ENCODE measurements at regions of chr14 and their contacts with region 1.

Region 1: DNA sequence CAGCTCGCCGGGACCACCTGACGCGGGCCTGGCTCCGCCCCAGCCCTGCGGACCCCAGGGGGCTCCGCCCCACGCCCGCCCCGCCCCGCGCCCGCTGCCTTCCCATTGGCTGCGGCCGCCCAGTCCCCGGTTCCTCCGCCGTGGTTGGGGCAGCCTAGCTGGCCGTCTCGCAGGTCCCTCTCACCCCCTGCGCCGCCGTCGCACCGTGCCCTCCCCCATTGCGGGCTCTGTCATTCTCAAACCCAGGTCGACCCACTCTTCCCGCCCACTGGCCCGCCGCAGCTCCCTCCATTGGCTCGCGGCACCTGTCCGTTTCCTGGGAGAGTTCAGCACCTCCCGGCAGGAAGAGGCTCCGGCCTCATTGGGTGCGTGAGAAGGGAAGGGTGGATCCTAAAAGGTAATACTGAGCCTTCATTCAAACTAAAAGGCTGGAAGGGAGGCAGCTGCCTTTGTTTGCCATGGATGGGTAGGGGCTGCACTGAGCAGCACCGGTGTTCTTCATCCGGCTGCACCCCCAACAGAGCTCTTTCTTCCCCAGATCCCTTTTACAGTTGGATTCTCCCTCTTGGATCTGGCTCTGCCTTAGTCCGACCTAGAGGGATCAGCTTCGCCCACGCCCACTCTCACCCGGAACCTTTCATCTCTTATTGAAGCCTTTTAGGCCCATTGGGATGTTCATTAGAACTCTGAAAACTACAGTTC is 381 bp upstream of the MAP3K9 start:
- DNase-seq: peak; percentile 98
- ATAC-seq: peak; percentile 89
- H3K4me3 ChIP-seq: peak overlapping the region; percentile 83
- H3K27ac ChIP-seq: peak overlapping the region; percentile 13
- H3K4me1 ChIP-seq: peaks cover 39% of the 10 kb centered on the region
- H3K27me3 ChIP-seq: no peaks in the 10 kb centered on the region
- CTCF ChIP-seq: no peak

Region 2: GRCh38 chr14:70600382-70601157 is 209.1 kb before region 1 on chr14 and contains the start of gene MED6:
- CTCF ChIA-PET with region 1: no interaction called
- POLR2A ChIA-PET with region 1: interaction called, 11 read pairs
- intact Hi-C with region 1: loop called (anchors 1 kb)
- DNase-seq: peak; percentile 94
- ATAC-seq: peak; percentile 95
- H3K4me3 ChIP-seq: peak within 1 kb of the TSS; percentile 87
- H3K27ac ChIP-seq: peak within 1 kb of the TSS; percentile 31
- H3K4me1 ChIP-seq: peaks cover 24% of the 10 kb centered on the region
- H3K27me3 ChIP-seq: no peaks in the 10 kb centered on the region
- CTCF ChIP-seq: no peak
- total RNA-seq, gene MED6: 37.8 and 46.9 TPM in 2 replicates

Region 3: DNA sequence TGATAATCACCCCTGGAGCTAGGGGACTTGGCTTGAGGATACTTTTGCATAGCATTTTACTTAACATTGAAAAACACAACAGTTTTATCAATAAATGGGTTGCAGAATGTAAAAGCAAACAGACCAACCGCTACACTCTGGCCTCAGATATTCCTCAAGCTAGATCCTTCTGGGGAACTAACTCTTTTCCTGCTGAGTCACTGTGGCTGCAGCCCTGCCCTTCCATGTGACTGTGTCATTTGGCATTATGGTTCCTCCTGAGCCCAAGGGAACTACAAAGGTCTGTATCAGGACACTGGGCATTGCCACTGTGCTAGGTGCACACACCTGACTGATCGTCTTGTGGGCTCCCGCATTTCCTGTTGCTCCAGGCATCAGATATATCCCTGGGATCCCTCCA is 111.4 kb before region 1 on chr14:
- CTCF ChIA-PET with region 1: interaction called, 3 read pairs
- POLR2A ChIA-PET with region 1: interaction called, 5 read pairs
- intact Hi-C with region 1: loop called (anchors 2 kb)
- DNase-seq: peak; percentile 87
- ATAC-seq: peak; percentile 92
- H3K4me3 ChIP-seq: peak overlapping the region; percentile 9
- H3K27ac ChIP-seq: peak overlapping the region; percentile 96
- H3K4me1 ChIP-seq: peaks cover 27% of the 10 kb centered on the region
- H3K27me3 ChIP-seq: no peaks in the 10 kb centered on the region
- CTCF ChIP-seq: no peak

Region 4: GRCh38 chr14:70821584-70822529 is 12.2 kb after region 1 on chr14:
- CTCF ChIA-PET with region 1: interaction called, 22 read pairs
- POLR2A ChIA-PET with region 1: no interaction called
- intact Hi-C with region 1: no loop called
- DNase-seq: peak; percentile 41
- ATAC-seq: peak; percentile 44
- H3K4me3 ChIP-seq: peak overlapping the region; percentile 76
- H3K27ac ChIP-seq: no peak overlapping the region
- H3K4me1 ChIP-seq: peaks cover 23% of the 10 kb centered on the region
- H3K27me3 ChIP-seq: no peaks in the 10 kb centered on the region
- CTCF ChIP-seq: no peak

Region 5: GRCh38 chr14:71036446-71036845 is 226.8 kb after region 1 on chr14:
- CTCF ChIA-PET with region 1: interaction called, 24 read pairs
- POLR2A ChIA-PET with region 1: no interaction called
- intact Hi-C with region 1: no loop called
- DNase-seq: peak; percentile 18
- ATAC-seq: peak; percentile 96
- H3K4me3 ChIP-seq: no peak overlapping the region
- H3K27ac ChIP-seq: no peak overlapping the region
- H3K4me1 ChIP-seq: no peaks in the 10 kb centered on the region
- H3K27me3 ChIP-seq: no peaks in the 10 kb centered on the region
- CTCF ChIP-seq: no peak